ENCODE measurements at regions of chr5 and their contacts with region 1.

Region 1: DNA sequence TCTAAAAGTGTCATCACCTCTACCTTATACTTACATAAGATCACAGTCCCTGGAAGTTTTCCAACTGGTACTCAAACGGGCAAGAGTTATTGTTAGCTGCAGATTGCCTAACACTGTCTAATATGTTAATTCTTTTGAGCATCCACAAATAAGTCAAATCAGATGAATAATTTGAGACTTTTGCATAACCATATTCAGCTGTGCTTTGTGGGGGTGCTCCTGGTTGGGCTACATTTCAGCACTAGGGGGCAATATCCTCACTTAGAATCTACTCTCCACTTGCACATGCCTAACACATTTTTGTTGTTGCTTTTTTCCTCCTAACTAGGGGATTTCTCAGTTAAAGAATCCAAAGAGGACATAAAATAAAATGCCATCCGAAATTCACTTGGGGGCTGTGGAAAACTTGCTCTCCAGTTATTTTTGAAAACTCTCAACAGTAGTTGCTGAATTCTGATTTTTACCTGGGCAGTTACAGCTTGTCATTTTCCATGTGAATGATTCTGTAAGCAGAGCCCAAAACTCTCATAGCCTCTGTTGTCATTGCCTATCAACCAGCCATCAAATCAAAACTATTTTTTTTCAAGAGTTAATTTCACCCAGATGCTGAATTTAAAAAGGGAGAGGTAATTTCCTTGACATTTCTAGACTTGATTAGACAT is 71.5 kb downstream of the TRIM36 start:
- DNase-seq: peak in 1 of 10 donors; percentile 27
- H3K4me3 ChIP-seq: no peak overlapping the region
- H3K27ac ChIP-seq: peak overlapping the region in 5 of 59 donors; percentile 12 to 41 (median 23)
- H3K27me3 ChIP-seq: no peaks in the 10 kb centered on the region
- CTCF ChIP-seq: peak; percentile 38 to 84 (median 74)

Region 2: GRCh38 chr5:115169487-115170133 is 71.4 kb after region 1 on chr5 and contains the start of gene TRIM36:
- intact Hi-C with region 1: loop called in 1 of 2 experiments (anchors 10 kb)
- DNase-seq: peak; percentile 62 to 96 (median 89)
- H3K4me3 ChIP-seq: peak within 1 kb of the TSS; percentile 53 to 99 (median 83)
- H3K27ac ChIP-seq: peak within 1 kb of the TSS in 54 of 59 donors; percentile 1 to 84 (median 66)
- H3K27me3 ChIP-seq: peaks cover 0 to 21% (median 0%) of the 10 kb centered on the region in 45 donors
- CTCF ChIP-seq: peak in 15 of 56 donors; percentile 5 to 35 (median 21)
- total RNA-seq, gene TRIM36: 16.6 to 66.6 (median 40.9) TPM

Region 3: GRCh38 chr5:115246361-115246991 is 148.3 kb after region 1 on chr5:
- intact Hi-C with region 1: loop called (anchors 2 to 5 kb)
- DNase-seq: no peak
- H3K4me3 ChIP-seq: no peak overlapping the region
- H3K27ac ChIP-seq: no peak overlapping the region
- H3K27me3 ChIP-seq: no peaks in the 10 kb centered on the region
- CTCF ChIP-seq: peak; percentile 54 to 90 (median 78)